HEK293 (cell line): ENCODE measurements at regions of chr1 and their contacts with region 1.

Region 1: DNA sequence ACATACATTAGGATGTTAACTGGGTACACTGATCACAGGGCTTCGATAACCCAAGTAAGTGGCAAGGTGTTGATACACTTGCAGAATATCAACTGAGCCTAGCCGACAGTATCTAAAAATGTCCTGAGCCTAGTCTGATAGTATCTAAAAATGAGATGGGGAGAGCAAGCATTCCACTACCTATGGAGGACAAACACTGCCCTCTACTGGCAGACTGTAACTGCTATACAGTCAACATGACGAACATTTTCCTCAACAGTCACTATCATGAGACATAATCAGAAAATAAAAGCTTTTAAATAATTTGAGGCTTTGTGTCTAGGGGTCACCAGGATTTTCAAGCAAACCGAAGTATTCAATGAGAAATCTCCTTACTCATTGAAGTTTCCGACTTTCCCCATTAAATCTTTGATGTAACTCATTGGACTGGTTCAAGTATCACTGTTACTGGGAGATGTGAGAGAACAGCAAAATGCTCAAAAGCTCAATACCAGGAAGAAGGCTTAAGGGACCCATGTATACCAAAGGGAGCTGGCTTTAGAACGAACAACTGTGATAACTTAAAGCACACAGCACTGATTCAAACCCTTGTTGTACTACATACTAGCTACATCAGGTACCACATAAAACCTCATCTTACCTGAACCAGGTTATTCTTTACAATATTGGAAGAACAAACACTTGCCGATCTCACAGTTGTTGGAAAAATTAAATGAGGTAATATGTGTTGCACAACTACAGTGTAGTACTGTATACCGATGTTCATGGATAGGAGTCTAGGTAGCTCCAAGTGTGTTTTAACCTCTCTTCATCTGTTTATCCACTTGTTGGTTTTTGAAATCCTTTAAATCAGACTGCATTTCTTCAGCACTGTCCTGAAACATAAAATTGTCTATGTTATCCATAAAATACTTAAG is 31.1 kb upstream of the SLC45A3 start:
- H3K4me3 ChIP-seq: no peak overlapping the region
- H3K27ac ChIP-seq: no peak overlapping the region
- H3K4me1 ChIP-seq: peaks cover 7% of the 10 kb centered on the region
- CTCF ChIP-seq: no peak; the same call in 1 of the 2 replicates

Region 2: GRCh38 chr1:205668951-205669340 is 42.4 kb before region 1 on chr1:
- CTCF ChIA-PET with region 1: interaction called, 23 read pairs
- POLR2A ChIA-PET with region 1: no interaction called
- H3K4me3 ChIP-seq: no peak overlapping the region
- H3K27ac ChIP-seq: no peak overlapping the region
- H3K4me1 ChIP-seq: no peaks in the 10 kb centered on the region
- CTCF ChIP-seq: no peak; the same call in 1 of the 2 replicates

Region 3: DNA sequence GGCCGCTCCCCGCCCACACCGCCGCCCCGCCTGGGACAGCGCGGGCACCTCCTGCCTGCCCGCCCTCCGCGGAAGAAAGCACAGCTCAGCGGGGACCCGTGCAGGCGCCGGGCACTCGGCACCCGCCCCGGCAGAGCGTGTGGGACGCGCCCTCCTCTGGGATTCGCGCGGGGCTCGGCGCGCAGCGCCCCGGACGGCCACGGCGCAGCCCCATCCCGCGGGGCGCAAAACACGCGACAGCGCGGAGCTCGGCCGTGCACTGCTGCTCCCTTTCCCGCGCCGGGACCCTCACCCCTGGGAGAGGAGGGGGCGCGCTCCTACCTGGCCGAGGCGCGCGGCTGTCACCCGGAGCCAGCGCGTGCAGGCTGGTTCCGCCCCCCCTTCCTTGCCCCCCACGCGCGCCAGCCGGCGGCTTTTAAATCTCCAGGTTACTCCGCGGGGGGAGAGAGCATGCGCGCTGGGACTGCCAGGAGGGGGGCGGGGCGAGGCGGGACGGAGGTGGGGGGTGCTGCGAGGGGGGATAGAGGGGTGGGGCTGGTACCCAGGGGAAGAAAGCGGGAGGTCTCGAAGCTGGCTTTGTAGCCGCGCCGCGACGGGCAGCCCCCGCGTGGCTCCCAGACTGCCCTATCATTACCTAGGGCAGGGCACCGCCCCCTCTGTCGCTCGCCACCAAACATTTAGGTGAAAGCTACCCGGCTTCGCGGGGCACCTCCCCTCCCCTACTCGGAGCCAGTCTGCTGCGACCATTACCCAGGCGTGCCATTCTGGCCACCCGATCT is 31.1 kb before region 1 on chr1 and contains the start of gene SLC45A3:
- CTCF ChIA-PET with region 1: interaction called, 15 read pairs
- POLR2A ChIA-PET with region 1: interaction called, 6 read pairs
- H3K4me3 ChIP-seq: peak within 1 kb of the TSS; percentile 67
- H3K27ac ChIP-seq: peak within 1 kb of the TSS; percentile 58; the same call in 1 of the 2 replicates
- H3K4me1 ChIP-seq: no peaks in the 10 kb centered on the region
- CTCF ChIP-seq: no peak

Region 4: DNA sequence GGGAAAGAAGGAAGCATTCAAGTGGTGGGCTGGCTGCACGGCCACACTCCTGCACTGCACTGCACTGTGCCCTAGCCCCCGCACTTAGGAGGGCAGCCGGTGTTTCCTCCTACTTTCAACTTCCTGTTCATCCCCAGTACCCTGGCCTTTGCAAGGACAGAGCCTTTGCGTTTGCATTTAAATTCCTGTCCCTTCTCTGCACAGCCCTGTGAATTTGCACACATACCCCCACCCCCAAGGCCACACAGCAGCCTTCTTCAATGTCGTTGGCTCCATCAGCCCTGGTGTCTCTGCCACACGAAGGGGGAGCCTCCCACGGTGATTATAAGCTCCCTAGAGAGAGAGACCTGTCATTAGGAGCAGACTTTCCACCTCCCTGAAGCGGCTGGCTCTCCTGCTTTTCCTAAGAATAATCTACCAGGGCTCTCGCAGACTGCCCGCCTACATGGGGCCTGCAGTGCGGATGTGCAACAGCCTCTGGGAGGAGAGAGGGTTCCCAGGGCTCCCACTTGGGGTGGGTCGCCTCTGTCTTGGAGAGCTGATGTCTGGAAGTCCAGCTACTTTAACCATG is 17.9 kb before region 1 on chr1:
- CTCF ChIA-PET with region 1: interaction called, 20 read pairs
- POLR2A ChIA-PET with region 1: interaction called, 4 read pairs
- H3K4me3 ChIP-seq: no peak overlapping the region
- H3K27ac ChIP-seq: no peak overlapping the region
- H3K4me1 ChIP-seq: no peaks in the 10 kb centered on the region
- CTCF ChIP-seq: no peak

Region 5: DNA sequence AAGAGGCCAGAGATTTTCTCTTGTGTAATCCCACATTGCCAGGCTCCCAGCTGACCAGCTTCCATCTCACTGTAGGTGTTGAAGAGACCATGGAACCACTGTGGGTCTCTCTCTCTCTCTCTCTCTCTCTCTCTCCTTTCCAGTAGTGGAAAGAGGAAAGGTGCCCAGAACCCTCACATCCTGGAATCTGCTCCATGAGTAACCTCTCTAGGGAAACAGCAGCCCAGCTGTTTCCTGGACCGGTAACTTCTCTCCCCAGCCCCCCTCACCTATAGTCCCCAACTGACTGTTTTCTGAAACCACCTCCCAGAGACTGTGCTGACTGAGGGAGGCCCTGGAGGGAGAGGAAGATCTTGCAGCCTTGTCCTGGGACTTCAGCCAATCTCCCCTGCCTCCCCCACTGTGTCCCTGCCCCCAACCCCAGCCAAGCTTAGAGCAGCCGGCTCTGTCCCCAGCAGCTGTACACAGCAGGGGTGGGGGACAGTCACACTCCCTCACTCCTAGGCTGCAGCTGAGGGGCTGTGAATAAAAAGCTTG is 10.4 kb before region 1 on chr1:
- CTCF ChIA-PET with region 1: interaction called, 20 read pairs
- POLR2A ChIA-PET with region 1: no interaction called
- H3K4me3 ChIP-seq: no peak overlapping the region
- H3K27ac ChIP-seq: no peak overlapping the region
- H3K4me1 ChIP-seq: 0 out of 2 replicates have a peak, but pooled peaks cover 4% of the 10 kb centered on the region
- CTCF ChIP-seq: no peak

Region 6: GRCh38 chr1:205729945-205730610 is 18.7 kb after region 1 on chr1:
- CTCF ChIA-PET with region 1: interaction called, 94 read pairs
- POLR2A ChIA-PET with region 1: interaction called, 3 read pairs
- H3K4me3 ChIP-seq: no peak overlapping the region
- H3K27ac ChIP-seq: no peak overlapping the region
- H3K4me1 ChIP-seq: no peaks in the 10 kb centered on the region
- CTCF ChIP-seq: no peak

Region 7: DNA sequence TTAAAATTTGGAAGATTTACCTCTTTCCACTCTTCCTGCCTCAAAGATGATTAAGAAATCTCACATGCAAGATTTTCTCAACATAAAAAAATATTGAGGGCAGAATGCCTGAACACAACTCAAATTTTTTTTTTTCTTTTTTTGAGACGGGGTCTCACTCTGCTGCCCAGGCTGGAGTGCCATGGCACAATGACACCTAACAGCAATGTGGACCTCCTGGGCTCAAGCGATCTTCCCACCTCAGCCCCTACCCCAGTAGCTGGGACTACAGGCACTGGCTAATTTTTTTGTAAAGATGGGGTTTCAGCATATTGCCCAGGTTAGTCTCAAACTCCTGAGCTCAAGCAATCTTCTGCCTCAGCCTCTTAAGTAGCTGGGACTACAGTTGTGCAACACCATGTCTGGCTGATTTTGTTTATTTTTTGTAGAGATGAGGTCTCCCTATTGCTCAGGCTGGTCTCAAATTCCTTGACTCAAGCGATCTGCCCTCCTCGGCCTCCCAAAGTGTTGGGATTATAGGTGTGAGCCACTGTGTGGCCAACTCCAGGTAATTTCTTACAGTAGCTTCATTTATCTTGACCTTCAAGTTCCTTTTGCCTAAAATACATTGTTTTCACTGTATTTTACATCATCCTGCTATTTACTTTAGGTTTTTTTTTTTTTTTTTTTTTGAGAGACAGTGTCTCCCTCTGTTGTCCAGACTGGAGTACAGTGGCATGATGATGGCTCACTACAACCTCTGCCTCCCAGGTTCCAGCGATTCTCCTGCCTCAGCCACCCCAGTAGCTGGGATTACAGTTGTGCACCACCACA is 28.2 kb after region 1 on chr1:
- CTCF ChIA-PET with region 1: interaction called, 29 read pairs
- POLR2A ChIA-PET with region 1: interaction called, 5 read pairs
- H3K4me3 ChIP-seq: no peak overlapping the region
- H3K27ac ChIP-seq: no peak overlapping the region
- H3K4me1 ChIP-seq: peaks cover 17% of the 10 kb centered on the region
- CTCF ChIP-seq: peak; percentile 40; the same call in 1 of the 2 replicates